ENCODE measurements at regions of chr10 and their contacts with region 1.

Region 1: GRCh38 chr10:21336476-21337170 is 188.9 kb downstream of the SKIDA1 start:
- DNase-seq: peak; percentile 90 to 94
- H3K4me3 ChIP-seq: no peak overlapping the region
- H3K4me3 Mint-ChIP-seq: peak overlapping the region; percentile 30
- H3K27ac Mint-ChIP-seq: peak overlapping the region; percentile 91
- H3K4me1 ChIP-seq: peaks cover 47% of the 10 kb centered on the region
- H3K4me1 Mint-ChIP-seq: peaks cover 31% of the 10 kb centered on the region
- H3K27me3 ChIP-seq: no peaks in the 10 kb centered on the region
- H3K27me3 Mint-ChIP-seq: no peaks in the 10 kb centered on the region
- CTCF ChIP-seq: peak; percentile 11 to 19

Region 2: GRCh38 chr10:21349912-21350286 is 13.3 kb after region 1 on chr10:
- CTCF ChIA-PET with region 1: interaction called, 3 read pairs
- POLR2A ChIA-PET with region 1: no interaction called
- intact Hi-C with region 1: loop called (anchors 1 kb)
- DNase-seq: no peak
- H3K4me3 ChIP-seq: no peak overlapping the region
- H3K4me3 Mint-ChIP-seq: peak overlapping the region; percentile 62
- H3K27ac Mint-ChIP-seq: peak overlapping the region; percentile 91
- H3K4me1 ChIP-seq: peaks cover 45% of the 10 kb centered on the region
- H3K4me1 Mint-ChIP-seq: peaks cover 41% of the 10 kb centered on the region
- H3K27me3 ChIP-seq: no peaks in the 10 kb centered on the region
- H3K27me3 Mint-ChIP-seq: no peaks in the 10 kb centered on the region
- CTCF ChIP-seq: no peak

Region 3: DNA sequence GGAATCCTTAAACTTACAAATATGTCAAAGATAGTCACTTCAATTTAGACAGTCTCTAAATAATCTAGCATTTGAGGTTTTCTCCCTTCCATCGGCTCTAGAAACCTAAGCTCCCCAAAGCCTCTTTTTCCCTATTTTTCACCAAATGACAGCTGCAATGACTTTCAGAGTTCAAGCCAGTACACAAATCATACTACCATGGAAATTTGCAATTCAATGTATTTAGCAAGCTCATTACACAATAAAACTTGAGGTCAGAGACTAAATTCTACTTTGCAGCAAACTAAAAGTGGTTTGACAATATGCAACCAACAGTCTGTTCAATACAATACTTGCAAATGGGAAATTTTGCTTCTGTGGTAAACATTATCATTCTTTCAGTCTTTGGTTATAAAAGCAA is 108.5 kb after region 1 on chr10:
- CTCF ChIA-PET with region 1: no interaction called
- POLR2A ChIA-PET with region 1: no interaction called
- intact Hi-C with region 1: no loop called
- DNase-seq: no peak
- H3K4me3 ChIP-seq: no peak overlapping the region
- H3K4me3 Mint-ChIP-seq: no peak overlapping the region
- H3K27ac Mint-ChIP-seq: no peak overlapping the region
- H3K4me1 ChIP-seq: no peaks in the 10 kb centered on the region; the same call in 1 of the 2 replicates
- H3K4me1 Mint-ChIP-seq: peaks cover 7% of the 10 kb centered on the region
- H3K27me3 ChIP-seq: no peaks in the 10 kb centered on the region
- H3K27me3 Mint-ChIP-seq: no peaks in the 10 kb centered on the region
- CTCF ChIP-seq: no peak

Region 4: DNA sequence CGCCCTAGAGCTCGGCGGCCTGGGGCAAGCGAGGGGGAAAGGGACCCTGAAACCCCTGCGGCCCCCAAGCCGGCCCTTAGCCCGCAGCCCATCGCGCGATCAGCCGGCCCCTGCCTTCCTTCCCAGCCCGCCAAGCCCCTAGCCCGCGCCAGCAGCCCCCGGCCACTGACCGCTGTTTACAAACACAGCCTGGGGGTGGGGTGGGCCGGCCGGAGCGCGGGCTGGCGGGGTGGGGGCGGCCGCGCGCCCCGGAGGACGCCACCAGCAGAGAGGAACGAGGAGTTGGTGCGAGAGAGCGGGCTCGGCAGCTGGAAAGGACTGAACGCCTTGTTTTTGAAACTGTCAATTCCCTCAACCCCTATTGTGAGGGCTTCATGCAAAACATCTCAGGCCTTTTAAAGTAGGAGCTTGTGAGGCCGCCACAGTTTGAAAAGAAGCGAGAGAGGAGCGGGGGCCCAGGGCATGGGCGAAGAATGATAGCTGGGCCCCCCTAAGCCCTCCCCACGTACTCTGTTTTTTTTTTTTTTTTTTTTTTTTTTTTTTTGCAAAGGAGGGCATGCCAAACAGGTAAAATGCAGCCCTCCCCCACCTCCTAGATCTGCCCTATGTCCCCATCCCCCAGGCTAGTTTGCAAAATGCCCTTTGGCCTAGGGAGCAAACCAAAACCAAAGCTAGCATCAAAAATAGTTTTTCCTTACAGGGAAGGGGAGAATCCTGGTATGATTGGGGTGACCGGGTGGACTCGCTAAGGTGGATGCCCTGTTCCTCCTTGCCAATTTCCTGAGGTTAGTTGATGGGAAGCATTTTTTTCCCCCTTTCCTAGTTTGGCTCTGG is 173.8 kb after region 1 on chr10:
- CTCF ChIA-PET with region 1: no interaction called
- POLR2A ChIA-PET with region 1: no interaction called
- intact Hi-C with region 1: no loop called
- DNase-seq: peak; percentile 51 to 56
- H3K4me3 ChIP-seq: no peak overlapping the region
- H3K4me3 Mint-ChIP-seq: peak overlapping the region; percentile 43
- H3K27ac Mint-ChIP-seq: peak overlapping the region; percentile 64
- H3K4me1 ChIP-seq: peaks cover 50% of the 10 kb centered on the region
- H3K4me1 Mint-ChIP-seq: peaks cover 71% of the 10 kb centered on the region
- H3K27me3 ChIP-seq: no peaks in the 10 kb centered on the region
- H3K27me3 Mint-ChIP-seq: no peaks in the 10 kb centered on the region
- CTCF ChIP-seq: no peak

Measured in Caco-2 (cell line).